Left ventricle myocardium inferior (tissue), 1 donor: ENCODE measurements at regions of chr15 and their contacts with region 1.

Region 1: DNA sequence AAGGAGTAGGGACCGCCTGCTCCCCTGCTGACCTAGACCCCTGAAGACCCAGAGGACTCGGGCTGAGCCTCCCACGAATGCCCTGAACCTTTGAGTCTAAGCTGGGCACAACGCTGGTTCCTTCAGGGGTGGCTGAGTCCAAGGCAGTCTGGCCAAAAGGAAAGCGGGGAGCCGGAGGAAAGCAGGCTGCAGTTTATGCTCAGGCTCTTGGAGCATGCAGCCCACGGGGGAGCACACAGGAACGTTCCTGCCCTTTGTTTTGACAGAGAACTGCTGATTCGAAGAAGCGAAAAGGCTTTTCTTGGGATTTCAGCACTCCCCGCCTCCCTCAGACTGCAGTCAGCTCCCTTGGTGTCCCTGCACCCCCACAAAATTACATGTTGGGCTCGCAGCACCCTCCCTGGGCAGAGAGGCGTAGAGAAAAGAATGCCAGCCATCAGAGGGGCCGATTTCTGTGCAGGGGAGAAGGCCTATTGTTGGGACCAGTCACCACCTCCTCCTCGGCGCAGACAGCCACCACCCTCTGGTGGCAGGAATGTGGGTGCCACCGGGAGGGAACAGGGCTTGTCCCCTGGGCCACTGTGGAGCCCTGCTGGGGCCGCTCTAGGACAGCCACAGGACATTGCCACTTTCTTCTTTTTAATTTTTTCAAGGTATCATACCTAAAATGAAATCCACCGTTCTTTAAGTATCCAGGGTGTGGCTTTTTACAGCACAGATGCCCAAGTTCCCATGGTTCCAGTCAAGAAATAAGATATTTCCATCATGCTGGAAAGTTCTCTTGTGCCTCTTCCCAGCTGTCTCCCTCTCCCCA is 72.2 kb downstream of the SMAD6 start:
- DNase-seq: peak; percentile 85
- H3K4me3 ChIP-seq: no peak overlapping the region
- H3K27ac ChIP-seq: peak overlapping the region; percentile 75
- H3K4me1 ChIP-seq: peaks cover 89% of the 10 kb centered on the region
- H3K27me3 ChIP-seq: no peaks in the 10 kb centered on the region
- CTCF ChIP-seq: peak; percentile 98

Region 2: DNA sequence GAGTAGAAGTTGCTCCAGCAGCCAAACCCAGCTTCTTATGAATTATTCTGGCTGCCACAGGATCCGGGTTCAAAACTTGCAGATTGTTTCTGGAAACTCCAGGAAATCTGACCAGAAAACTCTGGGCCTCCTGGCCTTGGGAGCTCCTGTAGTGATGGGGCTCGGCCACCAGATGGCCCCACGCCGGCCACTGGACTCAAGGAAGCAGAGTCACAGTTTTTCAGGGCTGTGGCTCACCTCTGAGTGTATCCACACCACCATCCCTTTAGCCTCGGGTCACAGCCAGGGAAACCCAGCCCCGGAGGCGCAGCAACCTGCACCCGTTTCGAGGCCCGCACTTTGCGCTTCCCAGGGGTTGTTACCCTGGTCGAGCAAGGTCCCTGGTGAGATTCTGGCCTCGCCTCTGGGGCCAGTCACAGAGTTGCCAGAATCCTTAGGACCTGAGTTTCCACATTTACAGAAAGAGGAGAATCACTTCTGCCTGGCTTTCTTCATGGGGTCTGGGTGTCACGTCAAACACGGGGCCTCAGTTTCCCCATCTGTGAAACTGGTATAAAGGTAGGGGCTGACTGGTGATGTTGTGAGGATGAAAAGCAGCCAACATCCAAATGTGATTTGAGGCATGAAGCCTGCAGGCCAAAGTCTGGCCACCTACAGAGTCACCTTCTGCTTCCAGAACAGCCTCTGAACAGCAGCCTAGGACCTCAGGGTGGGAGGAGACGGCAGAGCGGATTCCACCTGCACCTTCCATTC is 154.9 kb before region 1 on chr15:
- intact Hi-C with region 1: loop called (anchors 10 kb)
- DNase-seq: peak; percentile 74
- H3K4me3 ChIP-seq: no peak overlapping the region
- H3K27ac ChIP-seq: peak overlapping the region; percentile 85
- H3K4me1 ChIP-seq: peaks cover 47% of the 10 kb centered on the region
- H3K27me3 ChIP-seq: peaks cover 5% of the 10 kb centered on the region
- CTCF ChIP-seq: peak; percentile 93

Region 3: DNA sequence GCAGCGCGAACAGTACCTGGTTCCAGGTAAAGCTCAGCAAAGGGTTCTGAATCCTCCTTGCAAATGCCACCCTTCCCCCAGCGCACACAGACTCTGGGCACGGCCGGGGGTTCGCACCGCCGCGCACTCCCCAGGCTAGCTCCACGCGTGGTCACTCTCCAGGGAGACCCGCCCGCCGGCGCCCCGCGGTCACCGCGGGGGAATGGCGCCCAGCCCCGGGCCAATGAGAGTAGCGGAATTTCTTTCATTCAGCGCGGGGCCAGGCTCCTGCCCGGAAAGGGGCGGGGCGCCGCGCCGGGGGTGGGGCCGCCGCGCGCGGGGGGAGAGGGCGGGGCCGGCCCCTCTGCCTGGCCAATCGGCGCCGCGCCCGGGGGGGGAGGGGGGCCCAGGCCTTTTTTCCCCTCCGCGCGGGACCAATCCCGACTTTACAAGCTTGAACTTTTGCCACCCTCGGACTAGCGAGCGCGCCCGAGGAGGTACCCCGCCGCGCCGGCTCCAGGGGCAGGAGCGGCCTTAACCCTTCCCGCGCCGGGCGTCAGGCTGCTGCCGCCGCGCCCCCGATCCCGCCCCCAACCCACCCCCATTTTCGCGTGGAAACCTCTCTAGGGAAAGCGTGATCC is 73.3 kb before region 1 on chr15:
- intact Hi-C with region 1: loop called (anchors 10 kb)
- DNase-seq: peak; percentile 97
- H3K4me3 ChIP-seq: peak overlapping the region; percentile 81
- H3K27ac ChIP-seq: peak overlapping the region; percentile 94
- H3K4me1 ChIP-seq: peaks cover 62% of the 10 kb centered on the region
- H3K27me3 ChIP-seq: no peaks in the 10 kb centered on the region
- CTCF ChIP-seq: no peak

Region 4: DNA sequence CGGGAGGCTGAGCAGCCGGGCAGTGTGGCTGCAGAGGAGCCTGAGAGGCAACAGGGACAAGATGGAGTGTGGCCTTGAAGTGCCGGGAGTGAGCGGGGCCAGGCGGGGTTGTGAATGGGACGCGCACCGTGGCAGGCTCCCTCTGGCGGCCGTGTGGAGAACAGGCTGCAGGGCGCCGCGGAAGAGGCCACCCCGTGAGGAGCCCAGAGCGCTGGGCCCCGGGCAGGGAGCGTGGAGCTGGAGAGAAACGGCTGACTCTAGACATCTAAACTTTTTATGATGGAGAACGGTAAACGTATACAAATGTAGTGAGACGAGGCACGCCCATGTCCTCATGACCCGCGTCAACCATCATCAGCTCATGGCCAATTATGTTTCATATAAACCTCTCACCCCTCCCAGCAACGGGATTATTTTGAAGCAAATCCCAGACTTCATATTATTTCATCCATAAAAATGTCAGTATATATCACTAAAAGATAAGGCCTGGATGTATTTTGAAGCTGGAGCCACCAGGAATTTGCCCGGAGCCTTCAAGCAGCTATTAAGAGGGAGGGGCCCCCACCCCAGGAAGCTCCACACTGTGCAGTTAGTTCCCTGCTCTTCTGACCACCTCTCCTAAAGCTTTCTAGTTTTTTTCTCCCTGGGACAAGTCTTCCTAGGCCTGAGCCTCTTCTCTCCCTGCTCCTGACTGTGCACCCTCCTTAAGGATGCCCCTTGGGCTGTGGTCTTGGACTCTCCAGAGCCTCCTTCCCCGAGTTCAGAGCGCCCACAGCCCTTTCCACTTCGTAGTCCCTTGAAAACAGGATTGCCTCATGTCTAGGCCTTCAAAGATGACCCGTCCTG is 77.2 kb after region 1 on chr15:
- intact Hi-C with region 1: loop called (anchors 5 kb)
- DNase-seq: peak; percentile 86
- H3K4me3 ChIP-seq: peak overlapping the region; percentile 40
- H3K27ac ChIP-seq: peak overlapping the region; percentile 76
- H3K4me1 ChIP-seq: peaks cover 40% of the 10 kb centered on the region
- H3K27me3 ChIP-seq: no peaks in the 10 kb centered on the region
- CTCF ChIP-seq: peak; percentile 99